Activated CD4-positive, alpha-beta memory T cell treated with anti-CD3 and anti-CD28 coated beads for 36 hours (primary cell): ENCODE measurements at regions of chr12 and their contacts with region 1.

Region 1: GRCh38 chr12:11648831-11649702 is at the start of gene ETV6:
- DNase-seq: peak; percentile 85
- H3K4me3 Mint-ChIP-seq: peak within 1 kb of the TSS; percentile 87
- H3K27ac Mint-ChIP-seq: peak within 1 kb of the TSS; percentile 98
- H3K4me1 Mint-ChIP-seq: peaks cover 28% of the 10 kb centered on the region
- H3K27me3 Mint-ChIP-seq: no peaks in the 10 kb centered on the region
- total RNA-seq, gene ETV6: 55.3 to 57.5 TPM

Region 2: GRCh38 chr12:11561411-11561810 is 87.7 kb before region 1 on chr12:
- CTCF ChIA-PET with region 1: no interaction called
- POLR2A ChIA-PET with region 1: no interaction called
- intact Hi-C with region 1: no loop called
- DNase-seq: no peak
- H3K4me3 Mint-ChIP-seq: no peak overlapping the region
- H3K27ac Mint-ChIP-seq: no peak overlapping the region
- H3K4me1 Mint-ChIP-seq: peaks cover 8% of the 10 kb centered on the region
- H3K27me3 Mint-ChIP-seq: peaks cover 2% of the 10 kb centered on the region

Region 3: GRCh38 chr12:11702959-11703358 is 53.9 kb after region 1 on chr12:
- CTCF ChIA-PET with region 1: interaction called, 4 read pairs
- POLR2A ChIA-PET with region 1: no interaction called
- intact Hi-C with region 1: loop called (anchors 1 kb)
- DNase-seq: peak; percentile 49
- H3K4me3 Mint-ChIP-seq: peak overlapping the region; percentile 48
- H3K27ac Mint-ChIP-seq: peak overlapping the region; percentile 76
- H3K4me1 Mint-ChIP-seq: peaks cover 63% of the 10 kb centered on the region
- H3K27me3 Mint-ChIP-seq: no peaks in the 10 kb centered on the region

Region 4: DNA sequence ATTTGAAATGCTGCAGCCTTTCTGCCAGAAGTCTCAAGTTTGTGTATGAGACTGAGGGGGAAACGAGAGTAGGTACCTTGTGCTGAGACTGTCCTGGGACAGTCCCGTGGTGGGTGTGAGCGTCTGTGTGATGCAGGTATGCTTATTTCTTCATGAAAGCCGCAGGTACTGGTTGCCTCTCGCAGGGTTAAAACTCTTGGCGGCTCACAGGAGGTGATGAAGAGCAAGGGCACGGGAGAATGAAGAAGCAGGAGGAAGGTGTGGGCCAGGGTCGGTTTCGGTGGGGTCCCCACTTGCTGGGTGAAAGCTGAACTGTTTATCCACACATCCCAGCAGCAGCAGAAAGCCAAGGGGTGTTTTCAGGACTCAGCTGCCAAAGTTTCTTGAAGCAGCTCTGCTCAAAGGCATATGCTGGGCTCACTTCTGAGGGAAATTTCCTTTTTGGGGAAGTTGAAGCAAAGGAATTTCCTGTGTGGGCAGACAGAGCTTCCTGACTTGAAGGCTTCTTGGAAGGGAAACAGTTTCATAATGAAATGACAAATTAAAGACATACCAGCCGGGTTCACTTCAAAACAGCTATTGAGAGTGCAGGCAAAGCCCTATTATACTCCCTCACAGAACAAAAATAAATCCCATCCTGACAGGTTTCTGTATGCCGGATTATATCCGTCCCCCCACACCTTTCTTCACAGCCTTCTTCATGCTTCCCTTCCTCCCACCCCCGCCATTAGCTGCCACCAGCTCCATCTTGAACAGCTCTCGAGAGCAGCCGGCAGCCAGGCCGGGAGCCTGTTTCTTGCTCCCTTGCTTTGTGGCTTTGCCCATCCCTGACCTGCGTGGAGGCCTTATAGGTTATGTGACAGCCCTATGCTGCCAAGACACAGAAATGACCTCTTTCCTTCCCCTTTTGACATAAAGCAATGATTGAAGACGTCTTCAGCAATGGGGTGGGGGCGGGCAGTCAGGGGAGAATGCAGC is 117.0 kb after region 1 on chr12:
- CTCF ChIA-PET with region 1: interaction called, 4 read pairs
- POLR2A ChIA-PET with region 1: interaction called, 29 read pairs
- intact Hi-C with region 1: loop called (anchors 1 kb)
- DNase-seq: peak; percentile 88
- H3K4me3 Mint-ChIP-seq: peak overlapping the region; percentile 28
- H3K27ac Mint-ChIP-seq: peak overlapping the region; percentile 84
- H3K4me1 Mint-ChIP-seq: peaks cover 99% of the 10 kb centered on the region
- H3K27me3 Mint-ChIP-seq: no peaks in the 10 kb centered on the region

Region 5: DNA sequence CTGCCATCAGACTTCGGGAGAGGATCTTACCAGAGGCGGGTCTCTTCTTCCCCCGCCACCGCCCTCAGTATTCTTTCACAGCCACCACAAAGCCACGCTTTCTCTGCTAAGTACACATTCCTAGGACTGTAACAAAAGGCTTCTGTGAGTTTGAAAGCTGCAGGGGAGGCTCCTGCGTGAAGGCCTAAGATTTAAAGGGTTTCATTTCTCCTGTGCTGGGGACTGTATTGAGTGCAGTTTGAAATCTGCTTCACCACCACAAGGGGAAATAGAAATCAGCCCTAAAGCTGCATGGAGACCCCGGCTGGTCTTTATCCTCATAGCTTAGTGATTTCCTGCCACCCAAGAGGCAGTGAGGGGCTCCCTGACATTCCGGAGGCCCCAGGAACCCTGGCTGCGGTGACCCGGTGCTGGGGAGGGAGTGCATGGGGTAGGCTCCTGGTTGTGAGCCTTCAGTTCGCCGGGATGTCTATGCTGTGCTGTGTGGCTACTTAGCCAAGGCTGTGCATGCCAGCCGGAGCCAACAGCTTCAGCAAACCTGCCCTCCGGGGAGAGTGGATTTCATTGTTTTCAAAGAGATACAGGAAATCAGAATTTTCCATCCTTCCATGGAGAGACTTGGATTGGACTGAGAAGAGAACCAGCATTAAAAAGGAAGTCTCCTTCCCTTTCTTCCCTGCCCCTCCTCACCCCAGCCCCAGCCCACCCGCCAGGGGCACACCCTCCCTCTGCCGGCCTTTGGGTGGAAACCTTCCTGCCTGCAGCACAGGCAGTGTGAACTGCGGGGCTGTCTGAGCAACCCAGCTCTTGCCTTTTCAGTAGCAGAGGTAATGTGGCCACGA is 163.7 kb after region 1 on chr12:
- CTCF ChIA-PET with region 1: no interaction called
- POLR2A ChIA-PET with region 1: no interaction called
- intact Hi-C with region 1: loop called (anchors 2 kb)
- DNase-seq: peak; percentile 41
- H3K4me3 Mint-ChIP-seq: peak overlapping the region; percentile 63
- H3K27ac Mint-ChIP-seq: peak overlapping the region; percentile 78
- H3K4me1 Mint-ChIP-seq: peaks cover 80% of the 10 kb centered on the region
- H3K27me3 Mint-ChIP-seq: no peaks in the 10 kb centered on the region

Region 6: GRCh38 chr12:11877869-11878780 is 229.1 kb after region 1 on chr12:
- CTCF ChIA-PET with region 1: no interaction called
- POLR2A ChIA-PET with region 1: interaction called, 3 read pairs
- intact Hi-C with region 1: loop called (anchors 5 kb)
- DNase-seq: peak; percentile 37
- H3K4me3 Mint-ChIP-seq: no peak overlapping the region
- H3K27ac Mint-ChIP-seq: peak overlapping the region; percentile 55
- H3K4me1 Mint-ChIP-seq: peaks cover 51% of the 10 kb centered on the region
- H3K27me3 Mint-ChIP-seq: no peaks in the 10 kb centered on the region

Region 7: DNA sequence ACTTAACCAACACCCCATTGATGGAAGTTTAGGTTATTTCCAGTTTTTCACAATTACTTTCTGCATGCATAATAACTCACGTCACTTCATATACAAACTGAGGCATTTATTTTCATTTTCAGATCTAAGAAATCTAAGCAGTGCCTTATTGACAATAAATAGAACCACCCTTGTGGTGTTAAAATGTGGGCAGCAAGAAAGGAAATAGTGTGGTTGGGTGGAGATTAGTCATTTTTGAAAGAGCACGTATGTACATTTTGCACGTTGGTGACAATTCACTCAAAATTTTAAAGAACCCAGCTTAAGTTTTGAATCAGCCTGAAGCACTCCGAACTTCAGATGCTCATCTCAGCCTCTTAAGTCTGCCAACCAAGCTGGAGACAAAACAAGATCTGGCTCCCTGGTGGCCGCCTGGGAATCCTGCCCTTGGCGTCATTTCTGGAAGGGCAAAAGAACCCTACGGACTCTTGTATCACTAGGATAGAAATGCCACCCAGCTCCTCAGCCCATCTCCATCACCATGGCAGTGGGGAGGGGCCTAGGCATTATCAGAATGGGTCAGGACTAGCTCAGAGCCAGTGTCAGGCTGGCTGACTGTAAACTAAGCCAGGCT is 332.2 kb after region 1 on chr12:
- CTCF ChIA-PET with region 1: no interaction called
- POLR2A ChIA-PET with region 1: interaction called, 12 read pairs
- intact Hi-C with region 1: loop called (anchors 1 kb)
- DNase-seq: peak; percentile 78
- H3K4me3 Mint-ChIP-seq: peak overlapping the region; percentile 36
- H3K27ac Mint-ChIP-seq: peak overlapping the region; percentile 99
- H3K4me1 Mint-ChIP-seq: peaks cover 68% of the 10 kb centered on the region
- H3K27me3 Mint-ChIP-seq: no peaks in the 10 kb centered on the region